ENCODE measurements at regions of chr1 and their contacts with region 1.

Region 1: GRCh38 chr1:151024540-151025146 is 11.7 kb upstream of the BNIPL start:
- DNase-seq: peak; percentile 86
- ATAC-seq: peak; percentile 98
- H3K4me3 ChIP-seq: no peak overlapping the region
- H3K4me3 Mint-ChIP-seq: no peak overlapping the region
- H3K27ac ChIP-seq: no peak overlapping the region
- H3K27ac Mint-ChIP-seq: peak overlapping the region; percentile 72
- H3K4me1 ChIP-seq: peaks cover 0 to 5% of the 10 kb centered on the region in 2 donors
- H3K4me1 Mint-ChIP-seq: peaks cover 6% of the 10 kb centered on the region
- H3K27me3 ChIP-seq: no peaks in the 10 kb centered on the region
- H3K27me3 Mint-ChIP-seq: no peaks in the 10 kb centered on the region
- CTCF ChIP-seq: peak; percentile 85

Region 2: GRCh38 chr1:151008190-151008860 is 16.3 kb before region 1 on chr1 and contains the start of gene PRUNE1:
- CTCF ChIA-PET with region 1: interaction called, 11 read pairs
- POLR2A ChIA-PET with region 1: no interaction called
- intact Hi-C with region 1: no loop called
- DNase-seq: peak; percentile 98
- ATAC-seq: peak; percentile 97
- H3K4me3 ChIP-seq: peak within 1 kb of the TSS; percentile 74 to 98 (median 85)
- H3K4me3 Mint-ChIP-seq: peak within 1 kb of the TSS; percentile 90
- H3K27ac ChIP-seq: peak within 1 kb of the TSS; percentile 82 to 95
- H3K27ac Mint-ChIP-seq: peak within 1 kb of the TSS; percentile 94
- H3K4me1 ChIP-seq: peaks cover 39 to 55% of the 10 kb centered on the region in 2 donors
- H3K4me1 Mint-ChIP-seq: peaks cover 66% of the 10 kb centered on the region
- H3K27me3 ChIP-seq: no peaks in the 10 kb centered on the region
- H3K27me3 Mint-ChIP-seq: no peaks in the 10 kb centered on the region
- CTCF ChIP-seq: no peak
- total RNA-seq, gene PRUNE1: 20.8 and 21.3 TPM in 2 replicates

Region 3: GRCh38 chr1:151047925-151048645 is 23.4 kb after region 1 on chr1:
- CTCF ChIA-PET with region 1: interaction called, 15 read pairs
- POLR2A ChIA-PET with region 1: interaction called, 7 read pairs
- intact Hi-C with region 1: loop called (anchors 2 kb)
- DNase-seq: peak; percentile 79
- ATAC-seq: peak; percentile 69
- H3K4me3 ChIP-seq: peak overlapping the region; percentile 70 to 97 (median 93)
- H3K4me3 Mint-ChIP-seq: peak overlapping the region; percentile 96
- H3K27ac ChIP-seq: peak overlapping the region; percentile 71 to 75
- H3K27ac Mint-ChIP-seq: peak overlapping the region; percentile 94
- H3K4me1 ChIP-seq: peaks cover 20 to 30% of the 10 kb centered on the region in 2 donors
- H3K4me1 Mint-ChIP-seq: peaks cover 42% of the 10 kb centered on the region
- H3K27me3 ChIP-seq: no peaks in the 10 kb centered on the region
- H3K27me3 Mint-ChIP-seq: no peaks in the 10 kb centered on the region
- CTCF ChIP-seq: peak; percentile 70

Region 4: DNA sequence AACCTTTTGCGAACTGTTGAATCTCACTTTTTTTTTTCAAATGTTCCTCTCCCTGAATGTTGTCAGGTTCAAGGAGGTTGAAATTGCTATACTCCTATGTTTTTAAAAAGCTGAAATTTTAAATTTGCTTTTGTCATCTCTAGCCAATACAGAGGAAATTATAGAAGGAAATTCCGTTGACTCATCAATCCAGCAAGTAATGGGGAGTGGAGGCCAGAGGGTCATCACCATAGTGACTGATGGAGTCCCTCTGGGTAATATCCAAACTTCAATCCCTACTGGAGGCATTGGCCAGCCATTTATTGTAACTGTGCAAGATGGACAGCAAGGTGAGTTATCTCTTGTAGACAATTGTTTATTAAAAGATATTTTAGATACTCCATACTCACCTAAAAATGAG is 82.3 kb after region 1 on chr1:
- CTCF ChIA-PET with region 1: interaction called, 61 read pairs
- POLR2A ChIA-PET with region 1: no interaction called
- intact Hi-C with region 1: no loop called
- DNase-seq: no peak
- ATAC-seq: no peak
- H3K4me3 ChIP-seq: no peak overlapping the region
- H3K4me3 Mint-ChIP-seq: no peak overlapping the region
- H3K27ac ChIP-seq: no peak overlapping the region
- H3K27ac Mint-ChIP-seq: no peak overlapping the region
- H3K4me1 ChIP-seq: no peaks in the 10 kb centered on the region
- H3K4me1 Mint-ChIP-seq: no peaks in the 10 kb centered on the region
- H3K27me3 ChIP-seq: no peaks in the 10 kb centered on the region
- H3K27me3 Mint-ChIP-seq: no peaks in the 10 kb centered on the region
- CTCF ChIP-seq: no peak

Region 5: DNA sequence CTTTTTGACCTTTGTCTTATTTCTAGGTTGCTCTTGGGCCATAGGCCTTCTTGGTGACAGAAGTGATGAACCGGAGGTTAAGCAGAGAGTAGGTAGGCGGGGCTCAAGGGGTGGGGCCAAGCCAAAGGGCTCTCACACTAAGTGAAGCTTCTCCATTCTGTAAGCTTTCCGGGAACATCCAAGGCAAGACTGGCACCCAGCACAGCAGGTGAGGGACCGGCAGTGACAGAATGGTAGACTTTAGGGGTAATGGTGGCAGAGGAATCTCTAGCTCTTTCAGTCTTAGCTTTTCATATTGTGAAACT is 131.8 kb after region 1 on chr1 and contains the start of gene TNFAIP8L2:
- CTCF ChIA-PET with region 1: interaction called, 58 read pairs
- POLR2A ChIA-PET with region 1: interaction called, 12 read pairs
- intact Hi-C with region 1: loop called (anchors 1 kb)
- DNase-seq: peak; percentile 77
- ATAC-seq: peak; percentile 85
- H3K4me3 ChIP-seq: peak within 1 kb of the TSS; percentile 72 to 98 (median 72)
- H3K4me3 Mint-ChIP-seq: peak within 1 kb of the TSS; percentile 99
- H3K27ac ChIP-seq: peak within 1 kb of the TSS; percentile 29 to 79
- H3K27ac Mint-ChIP-seq: peak within 1 kb of the TSS; percentile 97
- H3K4me1 ChIP-seq: peaks cover 30 to 37% of the 10 kb centered on the region in 2 donors
- H3K4me1 Mint-ChIP-seq: peaks cover 41% of the 10 kb centered on the region
- H3K27me3 ChIP-seq: no peaks in the 10 kb centered on the region
- H3K27me3 Mint-ChIP-seq: no peaks in the 10 kb centered on the region
- CTCF ChIP-seq: no peak
- total RNA-seq, gene TNFAIP8L2: 14.9 and 17.6 TPM in 2 replicates